Heart right ventricle (tissue), 16 donors: ENCODE measurements at regions of chr6 and their contacts with region 1.

Region 1: DNA sequence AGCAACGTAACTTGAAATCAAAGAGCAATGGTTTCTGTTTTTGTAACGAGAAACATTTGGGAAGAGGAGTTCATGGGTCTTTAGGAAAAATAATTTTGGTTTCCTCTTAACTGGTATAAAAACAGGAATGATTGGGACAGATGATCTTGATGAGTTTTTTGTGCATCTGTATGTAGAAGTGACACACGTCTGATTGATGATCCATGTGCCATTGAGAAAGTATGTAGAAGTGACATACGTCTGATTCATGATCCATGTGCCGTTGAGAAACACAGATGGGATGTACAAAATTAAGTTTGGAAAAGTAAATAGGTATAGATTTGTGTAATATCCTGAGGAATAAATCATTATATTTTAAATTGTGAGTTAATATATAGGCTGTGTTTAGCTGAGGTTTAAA is 2.1 kb downstream of the KIAA1586 start:
- DNase-seq: no peak
- ATAC-seq: no peak
- H3K4me3 ChIP-seq: no peak overlapping the region
- H3K27ac ChIP-seq: no peak overlapping the region
- H3K4me1 ChIP-seq: peaks cover 0 to 21% (median 9%) of the 10 kb centered on the region in 9 donors
- H3K27me3 ChIP-seq: no peaks in the 10 kb centered on the region
- CTCF ChIP-seq: no peak

Region 2: GRCh38 chr6:56970849-56971248 is 77.7 kb before region 1 on chr6:
- intact Hi-C with region 1: no loop called
- DNase-seq: no peak
- ATAC-seq: no peak
- H3K4me3 ChIP-seq: no peak overlapping the region
- H3K27ac ChIP-seq: no peak overlapping the region
- H3K4me1 ChIP-seq: no peaks in the 10 kb centered on the region
- H3K27me3 ChIP-seq: peaks cover 0 to 4% (median 0%) of the 10 kb centered on the region in 7 donors
- CTCF ChIP-seq: no peak

Region 3: DNA sequence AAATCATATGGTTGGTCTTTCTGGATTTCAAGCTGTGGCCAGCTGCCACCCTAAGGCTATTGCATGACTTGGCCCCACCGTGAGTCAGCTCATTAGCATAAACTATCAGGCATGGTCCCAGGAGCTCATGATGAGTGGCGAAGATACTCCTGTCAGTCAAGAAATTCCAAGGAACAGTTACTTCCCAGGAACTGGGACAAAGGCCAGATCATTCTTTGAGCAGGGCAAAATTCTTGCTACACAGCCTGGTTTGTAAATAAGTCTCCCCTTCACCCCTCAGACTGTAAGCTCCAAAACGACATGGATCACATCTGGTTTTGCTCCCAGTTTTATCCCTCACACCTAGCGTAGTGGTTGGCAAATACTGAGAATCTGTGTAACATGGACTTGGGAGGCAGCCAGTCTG is 35.1 kb before region 1 on chr6:
- intact Hi-C with region 1: no loop called
- DNase-seq: no peak
- ATAC-seq: no peak
- H3K4me3 ChIP-seq: no peak overlapping the region
- H3K27ac ChIP-seq: no peak overlapping the region
- H3K4me1 ChIP-seq: no peaks in the 10 kb centered on the region
- H3K27me3 ChIP-seq: no peaks in the 10 kb centered on the region
- CTCF ChIP-seq: no peak

Region 4: DNA sequence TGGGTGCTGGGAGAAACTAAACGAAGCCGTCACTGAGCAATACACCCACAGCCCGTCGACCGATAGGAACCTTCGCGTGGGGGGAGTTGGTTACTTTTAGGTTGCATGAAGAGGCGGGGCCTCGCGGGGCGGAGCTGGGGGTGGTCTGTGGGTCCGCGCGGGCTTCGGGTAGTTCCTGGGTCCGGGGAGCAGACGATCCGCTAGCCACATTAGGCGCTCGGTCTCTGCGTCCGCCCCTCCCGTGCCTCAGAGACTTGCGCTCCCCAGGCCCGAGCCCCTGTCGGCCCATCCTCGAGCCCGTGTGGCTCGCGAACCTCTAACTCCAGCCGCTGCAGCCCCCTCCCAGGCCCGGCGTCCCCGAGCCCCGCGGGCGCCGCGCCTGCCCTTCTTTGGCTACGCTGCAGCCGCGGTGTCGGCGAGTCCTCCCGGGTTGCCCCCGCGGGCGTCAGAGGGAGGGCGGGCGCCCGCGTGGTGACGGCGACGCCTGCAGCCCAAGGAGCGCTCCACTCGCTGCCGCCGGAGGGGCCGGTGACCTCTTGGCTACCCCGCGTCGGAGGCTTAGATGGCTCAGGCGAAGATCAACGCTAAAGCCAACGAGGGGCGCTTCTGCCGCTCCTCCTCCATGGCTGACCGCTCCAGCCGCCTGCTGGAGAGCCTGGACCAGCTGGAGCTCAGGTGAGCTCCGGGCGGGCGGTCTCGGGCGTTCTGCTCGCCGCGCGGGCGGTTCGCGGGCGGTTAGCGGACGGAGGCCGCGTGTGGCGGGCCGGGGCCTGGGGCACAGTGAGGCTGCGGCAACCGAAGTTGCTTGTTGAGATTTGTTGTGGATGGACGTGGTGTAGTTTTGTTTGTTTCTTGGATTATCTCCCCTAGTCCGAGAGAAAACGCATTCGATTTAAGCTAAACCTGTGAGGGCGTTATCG is 123.8 kb after region 1 on chr6 and contains the start of gene BAG2:
- intact Hi-C with region 1: loop called in 1 of 10 experiments (anchors 5 kb)
- DNase-seq: peak; percentile 85 to 87
- ATAC-seq: peak; percentile 94 to 98 (median 95)
- H3K4me3 ChIP-seq: peak within 1 kb of the TSS; percentile 57 to 80 (median 76)
- H3K27ac ChIP-seq: peak within 1 kb of the TSS; percentile 88 to 98 (median 91)
- H3K4me1 ChIP-seq: peaks cover 0 to 39% (median 19%) of the 10 kb centered on the region in 9 donors
- H3K27me3 ChIP-seq: no peaks in the 10 kb centered on the region
- CTCF ChIP-seq: peak in 5 of 9 donors; percentile 7 to 46 (median 27)
- total RNA-seq, gene BAG2: 7.2 to 15.6 (median 9.7) TPM